CD4-positive, alpha-beta T cell (primary cell): ENCODE measurements at regions of chr21 and their contacts with region 1.

Region 1: GRCh38 chr21:32834916-32835235 is 63.3 kb upstream of the PAXBP1 start:
- DNase-seq: no peak
- ATAC-seq: no peak
- H3K4me3 ChIP-seq: no peak overlapping the region
- H3K4me3 Mint-ChIP-seq: no peak overlapping the region
- H3K27ac ChIP-seq: no peak overlapping the region
- H3K27ac Mint-ChIP-seq: no peak overlapping the region
- H3K4me1 ChIP-seq: no peaks in the 10 kb centered on the region
- H3K4me1 Mint-ChIP-seq: no peaks in the 10 kb centered on the region
- H3K27me3 ChIP-seq: peaks cover 5 to 7% of the 10 kb centered on the region in 2 experiments
- H3K27me3 Mint-ChIP-seq: peaks cover 27% of the 10 kb centered on the region
- CTCF ChIP-seq: no peak

Region 2: DNA sequence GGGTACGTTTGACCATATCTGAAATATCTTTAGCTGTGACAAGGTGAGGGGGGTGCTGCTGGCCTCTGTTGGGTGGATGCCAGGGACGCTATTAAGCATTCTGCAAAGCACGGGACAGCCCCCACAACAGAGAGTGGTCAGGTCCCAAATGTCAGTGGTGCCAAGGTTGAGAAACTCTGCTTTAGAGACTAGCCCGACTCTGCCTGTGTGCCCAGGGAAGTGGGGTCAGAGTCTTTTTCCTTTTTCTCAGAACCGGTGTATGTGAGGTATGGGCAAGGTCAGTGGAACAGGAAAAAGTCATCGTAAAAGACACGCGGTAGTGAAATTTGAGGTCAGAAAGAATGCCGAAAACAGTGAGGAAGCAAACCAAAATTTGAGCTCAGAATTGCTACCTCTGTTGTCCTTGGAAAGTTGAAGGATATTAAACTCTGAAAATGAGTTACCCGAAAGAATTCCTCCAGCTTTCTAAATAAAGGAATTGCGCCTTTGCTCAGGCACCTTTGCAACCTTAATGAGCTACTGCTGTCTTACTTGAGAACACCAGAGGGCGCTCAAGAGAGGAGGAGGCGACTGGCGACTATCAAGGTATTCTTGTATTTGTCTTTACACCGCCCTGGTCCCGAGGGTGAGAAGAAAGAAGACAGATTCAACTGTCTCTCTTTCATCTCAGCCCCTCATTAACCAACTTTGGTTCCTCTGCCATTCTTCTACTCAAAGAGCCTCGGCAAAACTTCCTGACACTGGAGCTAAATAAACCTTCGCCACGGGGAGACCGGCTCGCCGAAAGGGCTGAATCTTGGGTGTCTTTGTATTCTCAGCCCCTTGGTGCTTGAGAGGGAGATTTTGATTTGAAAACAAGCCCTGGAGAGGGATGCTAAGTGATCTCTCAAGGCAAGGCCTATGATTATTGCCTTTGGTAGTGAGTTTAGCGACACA is 105.5 kb after region 1 on chr21:
- CTCF ChIA-PET with region 1: no interaction called
- POLR2A ChIA-PET with region 1: no interaction called
- intact Hi-C with region 1: loop called in 1 of 2 experiments (anchors 5 kb)
- DNase-seq: peak in 12 of 14 experiments; percentile 7 to 79 (median 20)
- ATAC-seq: peak; percentile 61
- H3K4me3 ChIP-seq: no peak overlapping the region
- H3K4me3 Mint-ChIP-seq: no peak overlapping the region
- H3K27ac ChIP-seq: no peak overlapping the region
- H3K27ac Mint-ChIP-seq: no peak overlapping the region
- H3K4me1 ChIP-seq: no peaks in the 10 kb centered on the region
- H3K4me1 Mint-ChIP-seq: no peaks in the 10 kb centered on the region
- H3K27me3 ChIP-seq: no peaks in the 10 kb centered on the region
- H3K27me3 Mint-ChIP-seq: no peaks in the 10 kb centered on the region
- CTCF ChIP-seq: peak; percentile 82

Region 3: DNA sequence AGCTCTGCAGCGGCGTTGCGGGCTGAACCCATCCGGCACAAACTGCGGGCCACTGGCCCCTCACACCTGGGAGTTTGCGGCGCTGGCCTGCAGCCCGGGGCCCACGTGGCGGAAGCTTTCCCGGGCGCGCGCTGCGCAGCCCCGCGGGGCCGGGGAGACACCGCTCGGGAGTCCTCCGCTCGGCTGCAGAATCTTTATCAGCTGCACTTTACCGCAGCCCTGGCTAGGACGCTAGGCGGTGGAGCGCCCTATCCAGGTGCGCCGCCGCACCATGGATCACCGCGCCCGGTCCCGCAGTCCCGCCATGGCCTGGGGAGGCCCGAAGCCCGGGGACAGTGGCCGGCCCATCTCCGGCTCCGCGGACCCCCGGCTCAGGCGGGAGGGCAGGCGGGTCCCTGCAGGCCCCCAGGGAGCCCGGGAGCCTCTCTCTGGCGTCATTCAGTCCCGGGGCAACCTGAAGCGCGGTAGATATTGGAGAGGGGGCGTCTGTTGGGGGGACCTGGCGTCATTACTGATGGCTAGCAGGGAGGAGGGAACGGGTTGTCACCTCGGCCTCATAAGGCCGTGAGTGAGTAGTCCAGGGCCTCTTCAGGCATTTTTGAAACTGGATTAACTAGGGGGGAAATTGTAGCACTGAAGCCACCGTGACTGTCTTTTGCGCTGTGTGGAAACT is 185.1 kb after region 1 on chr21:
- CTCF ChIA-PET with region 1: no interaction called
- POLR2A ChIA-PET with region 1: no interaction called
- intact Hi-C with region 1: no loop called
- DNase-seq: peak in 2 of 14 experiments; percentile 13 to 34
- ATAC-seq: peak; percentile 51
- H3K4me3 ChIP-seq: peak overlapping the region; percentile 10
- H3K4me3 Mint-ChIP-seq: peak overlapping the region; percentile 75
- H3K27ac ChIP-seq: no peak overlapping the region
- H3K27ac Mint-ChIP-seq: no peak overlapping the region
- H3K4me1 ChIP-seq: peaks cover 44% of the 10 kb centered on the region
- H3K4me1 Mint-ChIP-seq: peaks cover 43% of the 10 kb centered on the region
- H3K27me3 ChIP-seq: peaks cover 75 to 87% of the 10 kb centered on the region in 2 experiments
- H3K27me3 Mint-ChIP-seq: peaks cover 94% of the 10 kb centered on the region
- CTCF ChIP-seq: no peak

Region 4: GRCh38 chr21:33127154-33127893 is 292.4 kb after region 1 on chr21:
- CTCF ChIA-PET with region 1: no interaction called
- POLR2A ChIA-PET with region 1: no interaction called
- intact Hi-C with region 1: loop called (anchors 2 to 5 kb)
- DNase-seq: peak; percentile 28 to 75 (median 50)
- ATAC-seq: peak; percentile 60
- H3K4me3 ChIP-seq: peak overlapping the region; percentile 40
- H3K4me3 Mint-ChIP-seq: peak overlapping the region; percentile 77
- H3K27ac ChIP-seq: no peak overlapping the region
- H3K27ac Mint-ChIP-seq: no peak overlapping the region
- H3K4me1 ChIP-seq: peaks cover 7% of the 10 kb centered on the region
- H3K4me1 Mint-ChIP-seq: peaks cover 14% of the 10 kb centered on the region
- H3K27me3 ChIP-seq: peaks cover 0 to 3% of the 10 kb centered on the region in 2 experiments
- H3K27me3 Mint-ChIP-seq: peaks cover 30% of the 10 kb centered on the region
- CTCF ChIP-seq: peak; percentile 73

Region 5: GRCh38 chr21:33374450-33375096 is 539.7 kb after region 1 on chr21:
- CTCF ChIA-PET with region 1: no interaction called
- POLR2A ChIA-PET with region 1: no interaction called
- intact Hi-C with region 1: loop called in 1 of 2 experiments (anchors 5 kb)
- DNase-seq: peak; percentile 40 to 81 (median 54)
- ATAC-seq: peak; percentile 87
- H3K4me3 ChIP-seq: no peak overlapping the region
- H3K4me3 Mint-ChIP-seq: no peak overlapping the region
- H3K27ac ChIP-seq: no peak overlapping the region
- H3K27ac Mint-ChIP-seq: no peak overlapping the region
- H3K4me1 ChIP-seq: peaks cover 16% of the 10 kb centered on the region
- H3K4me1 Mint-ChIP-seq: peaks cover 7% of the 10 kb centered on the region
- H3K27me3 ChIP-seq: no peaks in the 10 kb centered on the region
- H3K27me3 Mint-ChIP-seq: no peaks in the 10 kb centered on the region
- CTCF ChIP-seq: peak; percentile 77

Region 6: GRCh38 chr21:33451634-33452071 is 616.8 kb after region 1 on chr21:
- CTCF ChIA-PET with region 1: no interaction called
- POLR2A ChIA-PET with region 1: no interaction called
- intact Hi-C with region 1: loop called in 1 of 2 experiments (anchors 5 kb)
- DNase-seq: no peak
- ATAC-seq: no peak
- H3K4me3 ChIP-seq: no peak overlapping the region
- H3K4me3 Mint-ChIP-seq: no peak overlapping the region
- H3K27ac ChIP-seq: no peak overlapping the region
- H3K27ac Mint-ChIP-seq: no peak overlapping the region
- H3K4me1 ChIP-seq: no peaks in the 10 kb centered on the region
- H3K4me1 Mint-ChIP-seq: no peaks in the 10 kb centered on the region
- H3K27me3 ChIP-seq: no peaks in the 10 kb centered on the region
- H3K27me3 Mint-ChIP-seq: no peaks in the 10 kb centered on the region
- CTCF ChIP-seq: no peak

Region 7: DNA sequence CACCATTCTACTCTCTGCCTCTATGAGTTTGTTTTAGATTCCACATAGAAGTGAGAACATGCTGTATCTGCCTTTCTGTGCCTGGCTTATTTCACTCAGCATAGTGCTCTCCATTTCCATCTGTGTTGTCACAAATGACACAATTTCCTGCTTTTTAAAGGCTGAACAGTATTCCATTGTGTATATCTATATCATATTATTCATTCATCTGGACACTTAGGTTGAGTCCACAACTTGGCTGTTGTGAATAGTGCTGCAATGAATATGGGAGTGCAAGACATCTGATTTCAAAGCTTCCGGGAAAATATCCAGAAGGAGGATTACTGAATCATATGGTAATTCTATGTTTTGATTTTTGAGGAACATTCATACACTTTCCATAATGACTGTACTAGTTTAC is 773.7 kb after region 1 on chr21:
- CTCF ChIA-PET with region 1: no interaction called
- POLR2A ChIA-PET with region 1: no interaction called
- intact Hi-C with region 1: loop called in 1 of 2 experiments (anchors 5 kb)
- DNase-seq: no peak
- ATAC-seq: no peak
- H3K4me3 ChIP-seq: no peak overlapping the region
- H3K4me3 Mint-ChIP-seq: no peak overlapping the region
- H3K27ac ChIP-seq: no peak overlapping the region
- H3K27ac Mint-ChIP-seq: no peak overlapping the region
- H3K4me1 ChIP-seq: no peaks in the 10 kb centered on the region
- H3K4me1 Mint-ChIP-seq: peaks cover 5% of the 10 kb centered on the region
- H3K27me3 ChIP-seq: no peaks in the 10 kb centered on the region
- H3K27me3 Mint-ChIP-seq: no peaks in the 10 kb centered on the region
- CTCF ChIP-seq: no peak